ENCODE measurements at regions of chr3 and their contacts with region 1.

Region 1: GRCh38 chr3:143433787-143434378 is 314.3 kb downstream of the CHST2 start:
- DNase-seq: peak; percentile 43
- H3K4me3 Mint-ChIP-seq: no peak overlapping the region
- H3K27ac Mint-ChIP-seq: no peak overlapping the region
- H3K4me1 Mint-ChIP-seq: no peaks in the 10 kb centered on the region
- H3K27me3 Mint-ChIP-seq: no peaks in the 10 kb centered on the region

Region 2: DNA sequence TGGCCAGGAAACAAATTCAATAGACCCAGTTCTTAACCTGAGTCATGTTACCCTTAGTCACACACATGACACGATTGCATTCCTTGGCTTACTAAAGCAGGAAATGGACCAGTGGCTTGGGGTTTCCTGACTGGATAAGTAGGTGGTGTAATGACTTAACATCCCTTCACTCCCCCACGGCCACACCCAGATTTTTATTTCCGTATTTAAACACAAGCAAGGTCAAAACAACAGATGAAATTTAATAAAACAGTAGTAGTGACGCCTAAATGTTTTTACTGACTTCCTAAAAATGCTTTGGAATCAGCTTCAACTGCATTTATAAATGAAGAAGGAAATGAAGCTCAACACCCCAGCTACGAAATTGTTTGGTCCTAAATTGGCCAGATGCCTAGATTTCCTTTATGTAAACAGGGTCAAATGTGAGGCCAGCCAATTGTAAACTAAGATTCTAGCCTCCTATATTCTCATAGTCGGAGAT is 10.0 kb after region 1 on chr3:
- CTCF ChIA-PET with region 1: interaction called, 13 read pairs
- DNase-seq: peak; percentile 37
- H3K4me3 Mint-ChIP-seq: no peak overlapping the region
- H3K27ac Mint-ChIP-seq: peak overlapping the region; percentile 25
- H3K4me1 Mint-ChIP-seq: peaks cover 24% of the 10 kb centered on the region
- H3K27me3 Mint-ChIP-seq: no peaks in the 10 kb centered on the region

Region 3: DNA sequence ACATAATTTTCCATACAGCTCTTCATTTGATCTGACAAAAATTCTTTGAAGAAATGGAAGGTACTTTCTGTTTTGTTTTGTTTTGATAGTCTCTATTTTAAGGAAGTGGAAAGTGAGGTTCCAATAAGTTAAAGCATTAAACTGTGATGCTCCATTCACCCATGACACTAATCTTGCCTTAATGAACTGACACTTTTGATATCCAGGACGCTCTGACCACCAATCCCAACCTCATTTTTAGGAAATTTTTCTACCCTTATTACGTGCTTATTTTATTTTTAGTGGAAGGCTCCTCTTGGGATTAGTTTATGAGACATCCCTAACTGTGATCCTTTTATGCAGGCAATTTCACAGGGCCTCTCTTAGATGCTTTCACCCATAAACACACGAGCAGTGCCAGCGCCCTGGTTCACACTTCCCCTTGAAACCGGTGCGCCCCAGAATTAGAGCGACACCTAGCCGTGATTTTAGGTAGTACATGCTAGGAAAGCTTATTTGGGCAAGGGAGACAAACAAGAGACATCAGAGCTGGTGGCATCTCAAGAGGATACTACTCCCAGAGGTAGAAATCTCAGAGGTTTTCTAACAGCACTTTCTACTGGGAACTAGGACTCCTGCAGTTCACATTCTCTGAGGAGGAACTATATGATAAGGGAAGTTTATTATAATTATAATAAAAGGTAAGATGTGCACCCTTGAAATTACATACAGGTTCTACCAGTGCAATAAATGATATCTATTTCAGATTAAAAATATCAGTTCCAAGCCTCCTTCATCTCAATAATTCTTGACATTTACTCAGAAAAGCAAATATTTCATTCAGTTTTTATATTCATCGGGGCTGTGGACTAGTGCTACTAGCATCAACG is 240.5 kb after region 1 on chr3:
- CTCF ChIA-PET with region 1: interaction called, 19 read pairs
- DNase-seq: peak; percentile 79
- H3K4me3 Mint-ChIP-seq: no peak overlapping the region
- H3K27ac Mint-ChIP-seq: no peak overlapping the region
- H3K4me1 Mint-ChIP-seq: peaks cover 11% of the 10 kb centered on the region
- H3K27me3 Mint-ChIP-seq: no peaks in the 10 kb centered on the region